Astrocyte of the cerebellum (primary cell): ENCODE measurements at regions of chr11 and their contacts with region 1.

Region 1: DNA sequence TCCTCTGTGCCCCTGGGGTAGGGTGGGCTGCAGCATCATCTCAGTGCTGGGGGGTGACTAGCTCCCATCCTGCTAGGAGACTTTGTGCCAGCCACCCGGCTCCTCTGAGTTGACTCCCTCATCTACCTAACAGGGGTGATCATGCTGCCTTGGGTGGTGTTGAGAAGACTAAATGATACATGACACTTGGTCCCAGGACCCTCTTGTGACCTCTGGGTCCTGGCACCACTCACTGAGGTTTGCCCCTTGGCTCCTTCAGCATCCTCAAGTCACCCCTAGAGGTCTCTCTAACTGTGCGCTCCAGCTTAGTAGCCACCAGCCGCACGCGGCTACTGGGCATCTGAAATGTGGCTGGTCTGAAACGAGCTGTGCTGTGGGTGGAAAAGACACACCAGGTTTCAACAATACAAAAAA is 72.1 kb downstream of the LRRC32 start:
- DNase-seq: peak; percentile 19
- H3K4me3 ChIP-seq: no peak overlapping the region
- CTCF ChIP-seq: peak; percentile 62

Region 2: GRCh38 chr11:76551400-76551799 is 47.0 kb before region 1 on chr11:
- in situ Hi-C with region 1: loop called (anchors 5 kb)
- DNase-seq: no peak
- H3K4me3 ChIP-seq: no peak overlapping the region
- CTCF ChIP-seq: peak; percentile 11

Region 3: DNA sequence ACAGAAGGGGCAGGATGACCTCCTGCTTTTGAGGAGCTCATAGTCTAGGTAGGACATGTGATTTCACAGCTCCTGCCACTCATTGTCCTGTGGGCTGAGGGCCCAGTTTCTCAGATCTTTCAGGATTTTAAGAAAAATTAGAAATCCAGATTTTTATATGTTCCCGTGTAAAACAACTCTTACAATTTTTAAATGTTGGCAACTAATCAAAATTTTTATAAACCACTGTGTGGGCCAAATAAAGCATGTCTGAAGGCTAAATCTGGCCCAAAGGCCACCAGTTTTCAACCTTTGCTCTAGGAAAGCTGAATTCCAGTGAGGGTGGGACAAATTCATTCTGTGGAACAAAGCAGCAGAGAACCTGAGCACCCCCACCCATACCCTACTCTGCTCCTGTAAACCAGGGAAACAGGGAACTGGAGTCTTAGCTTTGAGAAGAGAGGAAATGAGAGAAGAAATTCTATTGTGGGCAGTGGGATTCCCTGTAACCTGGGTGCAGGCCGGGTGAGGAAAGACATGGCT is 51.5 kb after region 1 on chr11:
- in situ Hi-C with region 1: loop called (anchors 5 kb)
- DNase-seq: no peak
- H3K4me3 ChIP-seq: no peak overlapping the region
- CTCF ChIP-seq: no peak

Region 4: GRCh38 chr11:76674517-76675400 is 76.3 kb after region 1 on chr11:
- in situ Hi-C with region 1: loop called (anchors 5 kb)
- DNase-seq: no peak
- H3K4me3 ChIP-seq: no peak overlapping the region
- CTCF ChIP-seq: peak; percentile 14

Region 5: DNA sequence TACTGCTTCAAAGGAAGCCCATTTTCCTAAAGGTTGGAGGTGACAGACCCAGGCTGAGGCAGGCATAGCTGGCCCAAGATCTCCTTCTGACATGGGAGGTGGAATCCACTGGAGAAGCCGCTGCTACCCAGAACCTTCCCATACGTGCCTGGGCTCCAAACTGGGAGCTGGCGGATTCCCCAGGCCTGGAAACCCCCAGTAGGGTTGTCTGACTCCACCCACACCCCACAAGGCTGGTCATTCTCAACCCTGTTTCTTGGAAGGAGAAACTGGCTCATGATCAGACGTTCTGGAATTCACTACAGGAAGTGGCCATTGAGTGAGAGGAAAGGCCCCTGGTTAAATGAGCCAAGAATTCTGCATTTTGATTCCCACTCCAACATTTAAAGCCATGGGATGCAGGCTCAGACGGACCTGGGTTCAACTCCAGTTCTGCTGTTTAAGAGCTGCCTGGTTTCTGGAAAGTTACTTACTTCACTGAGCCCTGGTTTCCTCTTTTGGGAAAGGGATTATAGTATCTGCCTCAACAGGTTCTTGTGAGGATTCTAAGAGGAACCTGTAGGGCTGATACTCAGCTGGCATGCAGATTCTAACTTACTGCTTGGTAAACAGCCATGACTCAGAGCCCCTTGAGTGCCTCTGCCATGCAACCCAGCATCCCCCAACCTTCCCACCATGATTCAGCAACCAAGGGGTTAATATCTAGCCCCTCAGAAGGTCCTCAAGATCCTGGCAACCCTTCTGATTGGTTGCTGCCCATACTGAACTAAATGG is 165.3 kb after region 1 on chr11:
- in situ Hi-C with region 1: no loop called
- DNase-seq: peak; percentile 96
- H3K4me3 ChIP-seq: no peak overlapping the region
- CTCF ChIP-seq: no peak